ENCODE measurements at regions of chr5 and their contacts with region 1.

Region 1: DNA sequence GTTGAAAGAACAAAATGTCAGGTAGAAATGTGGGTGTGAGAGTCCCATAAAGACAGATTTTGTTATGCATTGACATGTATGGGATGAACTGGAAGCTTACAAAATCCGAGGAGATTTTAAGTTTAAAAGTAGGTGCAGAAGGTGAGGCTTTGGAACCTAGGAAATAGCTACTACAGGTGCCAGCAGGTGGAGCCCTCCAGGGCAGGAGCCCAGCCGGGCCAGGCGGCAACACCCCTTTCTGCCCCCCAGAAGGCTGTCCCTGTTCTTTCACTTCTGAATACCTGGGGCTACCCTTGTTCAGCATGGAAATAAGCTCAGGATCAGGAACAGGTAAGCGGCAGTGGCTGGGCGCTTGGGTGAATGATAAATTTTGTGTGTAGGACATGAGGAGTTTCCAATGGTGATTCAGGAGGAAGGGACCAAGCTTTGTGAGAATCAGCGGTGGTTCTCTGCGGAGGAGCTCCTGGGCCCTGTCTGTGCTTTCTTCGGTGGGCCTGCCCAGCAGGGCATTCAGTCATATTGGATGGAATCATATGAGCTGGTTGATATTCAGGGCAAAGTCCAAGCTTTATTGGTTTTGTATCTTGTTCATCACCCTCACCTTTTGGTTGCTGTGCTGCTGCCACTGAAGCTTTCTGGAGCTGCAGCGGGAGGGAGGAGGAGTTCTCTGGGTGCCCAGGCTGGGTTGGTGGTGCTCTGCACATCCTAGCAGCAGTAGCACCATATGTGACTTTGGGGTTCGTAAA is 12.3 kb downstream of the PCBD2 start:
- DNase-seq: peak; percentile 30
- ATAC-seq: no peak
- H3K4me3 Mint-ChIP-seq: no peak overlapping the region
- H3K27ac Mint-ChIP-seq: peak overlapping the region; percentile 17
- H3K4me1 Mint-ChIP-seq: peaks cover 29% of the 10 kb centered on the region
- H3K27me3 Mint-ChIP-seq: no peaks in the 10 kb centered on the region

Region 2: DNA sequence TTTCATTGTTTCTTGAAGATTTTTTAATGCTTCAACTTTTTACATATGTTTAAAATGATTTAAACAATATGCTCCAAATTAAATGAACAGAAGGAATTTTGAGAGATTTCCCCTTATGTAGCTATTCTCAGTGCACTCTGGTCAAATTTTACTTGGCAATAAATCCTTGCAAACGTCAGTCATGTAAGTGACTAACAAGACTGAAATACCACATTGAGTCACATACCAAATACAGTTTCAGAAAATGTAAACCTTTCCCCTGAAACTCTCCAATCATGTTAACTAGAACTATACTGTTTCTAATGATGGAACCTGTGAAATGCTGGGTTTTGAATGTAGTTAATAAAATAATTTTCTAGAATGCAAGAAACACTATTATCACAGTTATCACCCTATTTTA is 314.2 kb before region 1 on chr5:
- CTCF ChIA-PET with region 1: no interaction called
- POLR2A ChIA-PET with region 1: no interaction called
- intact Hi-C with region 1: loop called in 1 of 2 experiments (anchors 1 kb)
- DNase-seq: no peak
- ATAC-seq: peak; percentile 91
- H3K4me3 Mint-ChIP-seq: peak overlapping the region; percentile 10
- H3K27ac Mint-ChIP-seq: peak overlapping the region; percentile 25
- H3K4me1 Mint-ChIP-seq: peaks cover 54% of the 10 kb centered on the region
- H3K27me3 Mint-ChIP-seq: no peaks in the 10 kb centered on the region

Region 3: GRCh38 chr5:134964359-134965270 is 47.4 kb after region 1 on chr5:
- CTCF ChIA-PET with region 1: interaction called, 3 read pairs
- POLR2A ChIA-PET with region 1: interaction called, 3 read pairs
- intact Hi-C with region 1: loop called (anchors 1 to 2 kb)
- DNase-seq: peak; percentile 28
- ATAC-seq: peak; percentile 93
- H3K4me3 Mint-ChIP-seq: peak overlapping the region; percentile 10
- H3K27ac Mint-ChIP-seq: peak overlapping the region; percentile 84
- H3K4me1 Mint-ChIP-seq: peaks cover 28% of the 10 kb centered on the region
- H3K27me3 Mint-ChIP-seq: no peaks in the 10 kb centered on the region

Region 4: DNA sequence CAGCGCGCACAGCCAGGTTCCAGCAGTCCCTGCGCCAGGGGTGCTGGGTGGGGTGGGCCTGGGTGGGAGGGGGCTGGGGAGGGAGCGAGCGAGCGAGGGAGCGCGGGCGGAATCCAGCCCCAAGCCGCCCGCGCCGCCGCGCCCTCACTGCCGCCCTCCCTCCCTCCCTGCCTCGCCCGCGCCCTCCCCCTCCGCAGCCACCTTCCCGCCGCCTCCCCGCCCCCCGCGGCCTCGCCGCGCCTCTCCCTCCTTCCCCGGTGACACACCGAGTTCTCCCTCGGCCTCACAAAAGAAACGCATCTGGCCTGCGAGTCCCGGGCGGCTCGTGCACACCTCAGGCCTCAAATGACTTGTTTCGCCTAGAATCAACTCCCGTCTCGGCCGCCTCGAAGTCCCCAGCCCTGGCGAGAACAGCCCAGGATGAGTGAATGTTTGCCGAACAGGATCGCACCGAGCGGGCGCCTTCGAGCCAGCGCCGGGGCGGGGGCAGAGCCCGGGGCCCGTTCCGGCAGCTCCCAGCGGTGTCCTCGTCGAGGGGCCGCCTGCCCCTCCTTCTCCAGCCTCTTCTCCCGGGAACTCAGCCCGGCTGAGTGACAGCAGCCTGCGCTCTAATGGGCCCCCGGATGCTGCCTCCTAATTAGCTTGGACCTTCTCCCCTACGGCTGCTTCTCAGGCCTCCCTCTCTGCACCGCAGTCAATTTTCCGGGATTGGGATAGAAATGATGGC is 117.2 kb after region 1 on chr5:
- CTCF ChIA-PET with region 1: no interaction called
- POLR2A ChIA-PET with region 1: no interaction called
- intact Hi-C with region 1: loop called in 1 of 2 experiments (anchors 10 kb)
- DNase-seq: peak; percentile 70
- ATAC-seq: peak; percentile 31
- H3K4me3 Mint-ChIP-seq: peak overlapping the region; percentile 63
- H3K27ac Mint-ChIP-seq: no peak overlapping the region
- H3K4me1 Mint-ChIP-seq: peaks cover 30% of the 10 kb centered on the region
- H3K27me3 Mint-ChIP-seq: peaks cover 78% of the 10 kb centered on the region

Region 5: DNA sequence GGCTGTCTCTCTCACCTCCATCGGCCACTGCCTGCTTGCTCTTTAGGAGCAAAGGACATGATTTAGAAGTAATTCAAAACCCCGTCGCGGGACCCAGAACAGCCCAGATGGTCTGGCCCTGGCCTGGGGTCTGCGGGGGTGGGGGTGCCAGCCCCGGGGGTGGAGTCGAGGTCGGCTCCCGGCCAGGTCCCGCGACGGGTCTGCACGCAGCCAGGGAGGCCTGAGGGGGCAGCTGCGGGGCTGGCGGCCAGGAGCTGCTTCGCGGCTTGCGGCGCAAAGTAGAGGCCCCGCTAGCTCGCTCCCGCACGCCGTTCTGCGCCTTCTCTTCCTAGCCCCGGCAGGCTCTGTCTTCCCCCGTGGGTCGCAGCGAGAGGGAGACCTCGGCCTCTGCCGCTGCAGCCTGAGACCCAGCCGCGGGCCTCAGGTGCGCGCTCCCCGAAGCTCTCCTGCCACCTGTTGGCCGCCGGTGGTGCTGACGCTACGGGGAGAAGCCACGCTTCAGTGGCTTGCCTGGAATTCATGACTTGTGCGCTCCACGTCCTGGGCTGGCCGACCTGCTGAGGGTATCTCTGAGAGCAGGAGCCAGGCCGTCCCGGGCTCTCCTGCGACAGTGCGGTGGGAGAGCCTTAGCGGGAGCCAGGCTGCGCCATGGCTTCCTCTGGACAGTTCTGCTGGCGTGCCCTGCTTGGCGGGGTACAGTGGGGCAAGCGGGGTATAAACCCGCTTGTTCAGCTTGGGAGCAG is 274.0 kb after region 1 on chr5:
- CTCF ChIA-PET with region 1: interaction called, 6 read pairs
- POLR2A ChIA-PET with region 1: no interaction called
- intact Hi-C with region 1: loop called (anchors 1 to 10 kb)
- DNase-seq: peak; percentile 89
- ATAC-seq: peak; percentile 98
- H3K4me3 Mint-ChIP-seq: peak overlapping the region; percentile 53
- H3K27ac Mint-ChIP-seq: no peak overlapping the region
- H3K4me1 Mint-ChIP-seq: peaks cover 2% of the 10 kb centered on the region
- H3K27me3 Mint-ChIP-seq: peaks cover 13% of the 10 kb centered on the region